OCI-LY7 (cell line): ENCODE measurements at regions of chr13 and their contacts with region 1.

Region 1: GRCh38 chr13:77429320-77430142 is 102.6 kb upstream of the MYCBP2 start:
- DNase-seq: peak; percentile 82
- H3K4me3 ChIP-seq: peak overlapping the region; percentile 36
- H3K27ac ChIP-seq: peak overlapping the region; percentile 71
- H3K4me1 ChIP-seq: peaks cover 18% of the 10 kb centered on the region
- CTCF ChIP-seq: no peak

Region 2: DNA sequence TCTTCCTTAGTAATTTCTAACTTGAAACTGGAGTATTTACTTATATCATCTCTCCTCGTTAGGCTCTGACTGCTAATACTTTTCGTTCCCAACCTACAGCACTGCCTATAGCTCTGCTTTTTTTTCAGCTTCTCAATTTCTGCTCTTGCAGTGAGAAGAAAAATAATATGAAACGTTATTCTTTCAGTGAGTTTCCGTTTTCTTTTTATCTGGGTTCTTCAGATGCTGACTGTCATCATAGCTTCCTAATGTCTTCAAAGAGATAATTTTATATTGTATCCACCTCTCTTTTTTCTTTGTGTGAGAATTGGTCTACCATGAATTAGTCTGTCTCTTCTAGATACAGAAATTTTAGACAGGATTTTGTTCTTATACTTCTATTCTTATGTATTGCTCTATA is 1338.5 kb before region 1 on chr13:
- CTCF ChIA-PET with region 1: no interaction called
- POLR2A ChIA-PET with region 1: no interaction called
- intact Hi-C with region 1: no loop called
- DNase-seq: no peak
- H3K4me3 ChIP-seq: no peak overlapping the region
- H3K27ac ChIP-seq: no peak overlapping the region
- H3K4me1 ChIP-seq: no peaks in the 10 kb centered on the region
- CTCF ChIP-seq: no peak

Region 3: DNA sequence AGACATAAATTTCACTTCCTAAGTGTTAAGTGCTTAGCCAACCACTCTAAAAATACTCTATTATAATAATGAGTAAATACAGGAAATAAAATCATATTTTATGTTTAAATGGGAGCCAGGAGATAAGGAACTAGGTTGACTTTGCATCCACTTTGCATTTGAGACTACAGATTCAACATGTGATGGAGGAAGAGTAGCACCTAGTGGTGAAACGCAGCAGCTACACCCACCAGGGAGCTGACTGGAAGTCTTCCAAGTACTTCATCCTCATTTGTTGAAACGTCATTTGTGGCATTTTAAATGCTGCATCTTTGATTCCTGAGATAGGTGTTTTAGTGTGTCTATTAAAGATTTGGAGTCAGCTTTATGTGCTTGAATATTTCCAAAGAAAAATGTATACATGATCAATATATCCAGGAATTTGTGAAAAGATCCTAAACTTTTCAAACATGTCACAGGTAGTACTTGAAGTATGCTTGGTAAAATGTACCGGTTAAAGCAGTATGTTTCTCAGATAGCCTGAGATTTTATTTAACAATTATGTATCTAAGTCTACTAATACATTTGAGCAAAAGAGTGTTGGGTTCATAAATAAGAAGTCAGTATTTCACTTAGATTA is 525.9 kb before region 1 on chr13:
- CTCF ChIA-PET with region 1: no interaction called
- POLR2A ChIA-PET with region 1: no interaction called
- intact Hi-C with region 1: no loop called
- DNase-seq: peak; percentile 63
- H3K4me3 ChIP-seq: no peak overlapping the region
- H3K27ac ChIP-seq: no peak overlapping the region
- H3K4me1 ChIP-seq: no peaks in the 10 kb centered on the region
- CTCF ChIP-seq: peak; percentile 99

Region 4: GRCh38 chr13:77338961-77339401 is 90.5 kb before region 1 on chr13:
- CTCF ChIA-PET with region 1: no interaction called
- POLR2A ChIA-PET with region 1: interaction called, 5 read pairs
- intact Hi-C with region 1: loop called (anchors 1 kb)
- DNase-seq: peak; percentile 73
- H3K4me3 ChIP-seq: peak overlapping the region; percentile 60
- H3K27ac ChIP-seq: peak overlapping the region; percentile 92
- H3K4me1 ChIP-seq: peaks cover 50% of the 10 kb centered on the region
- CTCF ChIP-seq: no peak

Region 5: DNA sequence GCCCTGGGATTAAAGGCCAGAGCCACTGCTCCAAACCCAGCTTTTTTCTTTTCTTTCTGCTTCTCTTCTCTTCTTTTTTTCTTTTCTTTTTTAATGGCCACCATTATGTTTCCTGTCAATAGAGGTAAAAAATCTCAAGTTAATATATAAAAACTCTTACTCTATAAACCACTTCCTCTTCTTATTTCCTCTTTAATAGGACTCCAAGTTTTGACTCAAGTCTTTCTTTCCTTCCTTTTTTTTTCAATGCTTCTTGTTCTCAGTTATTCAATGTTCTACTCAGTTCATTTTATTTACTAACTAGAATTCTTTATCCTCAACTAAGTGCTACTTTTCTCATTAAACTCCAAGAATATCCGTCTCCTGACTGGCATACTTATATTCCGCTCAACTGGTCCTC is 75.5 kb before region 1 on chr13:
- CTCF ChIA-PET with region 1: no interaction called
- POLR2A ChIA-PET with region 1: interaction called, 5 read pairs
- intact Hi-C with region 1: loop called (anchors 5 kb)
- DNase-seq: peak; percentile 48
- H3K4me3 ChIP-seq: peak overlapping the region; percentile 30
- H3K27ac ChIP-seq: peak overlapping the region; percentile 60
- H3K4me1 ChIP-seq: peaks cover 16% of the 10 kb centered on the region
- CTCF ChIP-seq: no peak

Region 6: DNA sequence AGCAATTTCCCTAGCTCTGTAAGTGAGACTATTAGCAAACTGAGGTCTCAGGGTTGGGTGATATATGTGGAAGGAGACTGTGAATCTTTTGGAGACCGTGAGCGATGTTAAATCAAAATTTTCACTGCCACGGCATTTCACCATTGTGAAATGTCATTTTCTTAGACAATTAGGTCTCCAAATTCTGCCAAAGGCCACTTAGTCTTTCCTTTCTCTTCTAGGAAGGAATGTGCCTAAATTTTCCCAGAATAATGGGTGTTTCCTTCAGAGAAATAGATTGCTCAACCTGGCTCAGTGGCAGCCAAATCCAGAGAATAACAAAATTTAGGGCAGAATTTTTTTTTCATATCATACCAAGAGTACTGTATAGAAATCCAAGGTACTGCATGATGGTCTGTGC is 41.5 kb after region 1 on chr13:
- CTCF ChIA-PET with region 1: no interaction called
- POLR2A ChIA-PET with region 1: no interaction called
- intact Hi-C with region 1: no loop called
- DNase-seq: no peak
- H3K4me3 ChIP-seq: no peak overlapping the region
- H3K27ac ChIP-seq: no peak overlapping the region
- H3K4me1 ChIP-seq: no peaks in the 10 kb centered on the region
- CTCF ChIP-seq: no peak